IMR-90 (cell line): ENCODE measurements at regions of chr4 and their contacts with region 1.

Region 1: GRCh38 chr4:57064811-57065711 is 45.1 kb downstream of the IGFBP7 start:
- DNase-seq: peak; percentile 98
- ATAC-seq: peak; percentile 76
- H3K4me3 ChIP-seq: peak overlapping the region; percentile 8; the same call in 1 of the 2 replicates
- H3K27ac ChIP-seq: peak overlapping the region; percentile 65
- H3K4me1 ChIP-seq: peaks cover 30% of the 10 kb centered on the region
- H3K27me3 ChIP-seq: no peaks in the 10 kb centered on the region
- CTCF ChIP-seq: no peak
- POLR2A ChIP-seq: no peak; the same call in 1 of the 2 replicates
- RAD21 ChIP-seq: peak; percentile 1; the same call in 1 of the 2 replicates

Region 2: GRCh38 chr4:57075367-57075766 is 10.3 kb after region 1 on chr4:
- CTCF ChIA-PET with region 1: interaction called, 10 read pairs
- POLR2A ChIA-PET with region 1: interaction called, 3 read pairs
- dilution Hi-C with region 1: no loop called
- in situ Hi-C with region 1: no loop called
- intact Hi-C with region 1: no loop called
- DNase-seq: no peak
- ATAC-seq: no peak
- H3K4me3 ChIP-seq: no peak overlapping the region
- H3K27ac ChIP-seq: no peak overlapping the region
- H3K4me1 ChIP-seq: peaks cover 17% of the 10 kb centered on the region
- H3K27me3 ChIP-seq: no peaks in the 10 kb centered on the region
- CTCF ChIP-seq: no peak
- POLR2A ChIP-seq: no peak
- RAD21 ChIP-seq: no peak

Region 3: GRCh38 chr4:57080781-57081650 is 16.0 kb after region 1 on chr4:
- CTCF ChIA-PET with region 1: interaction called, 10 read pairs
- POLR2A ChIA-PET with region 1: interaction called, 5 read pairs
- dilution Hi-C with region 1: no loop called
- in situ Hi-C with region 1: no loop called
- intact Hi-C with region 1: loop called (anchors 1 kb)
- DNase-seq: peak; percentile 98
- ATAC-seq: peak; percentile 83
- H3K4me3 ChIP-seq: no peak overlapping the region
- H3K27ac ChIP-seq: peak overlapping the region; percentile 91
- H3K4me1 ChIP-seq: peaks cover 23% of the 10 kb centered on the region
- H3K27me3 ChIP-seq: no peaks in the 10 kb centered on the region
- CTCF ChIP-seq: no peak
- POLR2A ChIP-seq: no peak
- RAD21 ChIP-seq: 0 out of 2 replicates have a peak, but pooled peaks have one; percentile 25